ENCODE measurements at regions of chr5 and their contacts with region 1.

Region 1: DNA sequence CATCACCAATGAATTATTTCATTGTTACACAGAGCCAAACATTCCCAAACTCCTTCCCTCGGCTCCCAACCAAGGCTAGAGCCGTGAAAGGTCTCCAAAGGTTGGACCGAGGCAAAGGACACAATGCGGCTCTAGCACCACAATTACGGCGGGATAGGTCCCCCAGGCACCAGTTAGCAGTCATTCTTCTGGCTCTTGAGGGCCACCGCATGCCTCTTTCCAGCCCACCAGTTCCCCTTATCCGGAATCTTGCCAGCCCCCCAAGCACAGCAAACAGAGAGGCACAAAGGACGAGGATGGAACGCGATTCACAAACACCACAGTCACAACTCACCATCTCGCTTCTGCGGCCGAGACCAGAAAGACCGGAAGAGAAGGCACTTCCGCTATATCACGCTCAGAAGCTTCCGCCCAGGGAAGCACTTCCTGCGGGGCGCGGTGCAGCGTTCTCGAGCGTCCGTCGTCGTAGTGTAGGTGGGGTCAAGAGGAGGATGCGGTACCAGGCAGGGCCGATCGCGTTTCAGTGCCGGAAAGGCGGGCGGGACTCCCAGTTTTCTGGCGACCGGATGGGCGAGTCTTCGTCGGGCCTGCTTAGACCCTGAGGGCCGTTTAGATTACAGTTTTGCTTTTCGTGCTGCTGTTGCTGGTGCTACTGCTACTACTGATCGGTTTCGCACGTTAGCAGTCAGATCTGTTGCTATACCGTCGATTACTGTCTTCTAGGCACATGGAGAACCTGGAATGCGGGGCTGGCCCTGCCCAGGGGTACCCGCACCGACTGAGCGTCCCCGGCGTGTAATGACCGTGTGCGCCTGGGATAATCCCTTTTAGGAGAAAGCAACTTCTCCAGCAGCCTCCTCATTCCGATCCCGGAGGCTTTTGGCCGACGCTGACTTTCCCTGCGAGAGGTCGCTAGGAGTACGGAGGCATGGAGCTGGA is at the start of gene RPL37:
- DNase-seq: peak; percentile 96
- ATAC-seq: peak; percentile 93
- H3K4me3 Mint-ChIP-seq: peak within 1 kb of the TSS; percentile 99
- H3K27ac Mint-ChIP-seq: peak within 1 kb of the TSS; percentile 100
- H3K4me1 Mint-ChIP-seq: peaks cover 44% of the 10 kb centered on the region
- H3K27me3 Mint-ChIP-seq: no peaks in the 10 kb centered on the region
- total RNA-seq, gene RPL37: 1,915 to 1,951 TPM

Region 2: DNA sequence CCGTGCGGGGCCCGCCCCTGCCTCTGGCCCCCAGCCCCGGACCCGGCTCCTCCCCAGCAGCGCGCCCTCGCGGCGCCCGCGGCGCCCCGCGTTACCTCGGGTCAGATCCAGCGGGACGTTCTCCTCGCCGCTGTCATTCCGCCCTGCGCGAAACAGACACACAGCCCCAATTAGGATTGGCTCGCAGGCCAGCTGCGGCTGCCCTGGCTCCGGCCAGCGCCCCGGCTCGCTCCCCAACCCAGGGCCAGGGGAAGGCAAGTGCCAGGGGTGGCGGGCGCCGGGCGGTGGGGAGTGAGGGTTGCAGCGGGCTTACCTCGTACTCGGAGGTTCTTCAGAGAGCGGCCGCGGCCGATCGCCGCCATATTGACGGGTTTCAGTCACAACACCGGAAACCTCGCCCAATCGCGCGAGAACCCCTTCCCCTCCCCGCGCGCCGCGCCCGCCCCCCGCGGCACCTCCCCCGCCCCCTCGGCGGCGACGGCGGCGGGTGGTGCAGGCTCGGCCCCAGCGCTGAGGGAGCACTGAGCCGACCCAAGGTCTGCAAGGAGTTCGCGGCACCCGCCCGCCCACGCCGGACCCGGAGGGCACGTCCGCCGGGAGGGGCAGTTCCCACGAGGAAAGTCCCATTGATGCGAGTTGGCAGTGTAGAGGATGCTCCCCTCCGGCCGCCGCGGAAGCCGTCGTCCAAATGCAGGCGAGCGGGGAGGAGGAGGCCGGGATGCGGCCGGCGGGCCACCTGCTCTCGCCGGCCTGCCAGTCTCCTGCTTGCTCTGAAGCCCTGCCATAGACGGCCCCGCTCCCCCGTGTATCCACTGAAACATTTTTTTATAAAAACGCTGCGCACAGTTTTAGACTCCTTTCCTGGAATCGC is 1760.9 kb before region 1 on chr5 and contains the start of gene RICTOR:
- CTCF ChIA-PET with region 1: no interaction called
- POLR2A ChIA-PET with region 1: no interaction called
- intact Hi-C with region 1: loop called in 1 of 2 experiments (anchors 10 kb)
- DNase-seq: peak; percentile 97
- ATAC-seq: peak; percentile 84
- H3K4me3 Mint-ChIP-seq: peak within 1 kb of the TSS; percentile 96
- H3K27ac Mint-ChIP-seq: peak within 1 kb of the TSS; percentile 99
- H3K4me1 Mint-ChIP-seq: peaks cover 40% of the 10 kb centered on the region
- H3K27me3 Mint-ChIP-seq: peaks cover 7% of the 10 kb centered on the region
- total RNA-seq, gene RICTOR: 23.2 to 28.5 TPM

Region 3: GRCh38 chr5:40404613-40405012 is 430.5 kb before region 1 on chr5:
- CTCF ChIA-PET with region 1: no interaction called
- POLR2A ChIA-PET with region 1: no interaction called
- intact Hi-C with region 1: loop called (anchors 5 to 10 kb)
- DNase-seq: no peak
- ATAC-seq: peak; percentile 28
- H3K4me3 Mint-ChIP-seq: peak overlapping the region; percentile 18
- H3K27ac Mint-ChIP-seq: peak overlapping the region; percentile 99
- H3K4me1 Mint-ChIP-seq: peaks cover 94% of the 10 kb centered on the region
- H3K27me3 Mint-ChIP-seq: no peaks in the 10 kb centered on the region

Region 4: GRCh38 chr5:40755407-40756365 is 79.4 kb before region 1 on chr5 and contains the start of gene TTC33:
- CTCF ChIA-PET with region 1: interaction called, 4 read pairs
- POLR2A ChIA-PET with region 1: no interaction called
- intact Hi-C with region 1: loop called (anchors 1 kb)
- DNase-seq: peak; percentile 99
- ATAC-seq: peak; percentile 90
- H3K4me3 Mint-ChIP-seq: no peak within 1 kb of the TSS
- H3K27ac Mint-ChIP-seq: no peak within 1 kb of the TSS
- H3K4me1 Mint-ChIP-seq: peaks cover 21% of the 10 kb centered on the region
- H3K27me3 Mint-ChIP-seq: no peaks in the 10 kb centered on the region
- total RNA-seq, gene TTC33: 31.4 to 31.7 TPM

Region 5: DNA sequence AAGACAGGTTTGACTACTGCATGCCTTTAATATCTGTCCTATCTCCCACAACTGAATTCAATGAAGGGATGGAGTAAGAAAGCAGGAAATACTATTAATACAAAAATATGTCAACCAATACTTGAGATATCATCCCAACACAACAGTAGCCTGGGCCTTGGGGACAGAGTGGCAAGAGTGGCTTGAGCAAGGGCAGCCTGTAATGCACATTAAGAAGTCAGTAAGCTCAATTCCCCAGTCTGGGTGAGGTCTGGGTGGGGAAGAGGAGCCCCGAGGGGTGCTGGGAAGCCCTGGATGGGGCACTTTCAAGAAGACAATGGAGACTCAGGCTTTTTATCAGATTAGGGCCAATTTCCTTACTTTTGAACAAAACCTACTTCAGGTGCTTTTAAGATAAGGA is 31.2 kb after region 1 on chr5:
- CTCF ChIA-PET with region 1: no interaction called
- POLR2A ChIA-PET with region 1: no interaction called
- intact Hi-C with region 1: no loop called
- DNase-seq: no peak
- ATAC-seq: no peak
- H3K4me3 Mint-ChIP-seq: no peak overlapping the region
- H3K27ac Mint-ChIP-seq: no peak overlapping the region
- H3K4me1 Mint-ChIP-seq: no peaks in the 10 kb centered on the region
- H3K27me3 Mint-ChIP-seq: peaks cover 2% of the 10 kb centered on the region

Region 6: DNA sequence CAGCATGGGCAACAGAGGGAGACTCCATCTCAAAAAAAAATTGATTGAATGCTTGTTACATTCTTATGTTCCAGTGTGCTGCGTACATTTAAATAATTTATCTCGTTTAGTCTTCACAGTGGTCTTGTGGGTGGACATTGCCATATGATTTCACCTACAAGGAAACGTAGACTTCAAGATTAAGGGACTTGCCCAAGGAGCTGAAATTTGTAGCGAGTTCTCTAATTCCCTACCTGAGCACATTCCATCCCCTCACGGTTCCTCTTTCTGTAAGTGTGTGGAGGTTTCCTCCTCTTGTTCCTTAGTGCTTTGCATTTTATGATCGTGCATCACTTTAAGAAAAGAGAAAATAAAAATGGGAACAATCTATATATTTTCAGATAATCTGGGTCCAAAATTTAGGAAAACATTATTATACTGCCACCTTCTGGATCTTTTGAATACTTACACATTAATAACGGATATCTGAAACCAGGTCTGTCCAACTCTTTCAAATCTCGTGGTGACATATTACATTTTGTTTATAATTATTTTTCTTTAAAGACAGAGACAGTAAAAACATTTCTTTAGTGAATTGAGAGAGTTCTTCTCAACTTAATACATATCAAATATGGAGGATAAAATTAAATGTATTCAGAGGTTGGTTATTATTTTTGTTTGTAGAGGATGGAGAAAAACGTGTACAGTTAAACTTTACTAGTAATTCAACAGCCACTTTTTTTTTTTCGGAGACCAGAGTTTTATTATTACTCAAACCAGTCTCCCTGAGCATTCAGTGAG is 44.2 kb after region 1 on chr5:
- CTCF ChIA-PET with region 1: no interaction called
- POLR2A ChIA-PET with region 1: no interaction called
- intact Hi-C with region 1: loop called in 1 of 2 experiments (anchors 5 kb)
- DNase-seq: no peak
- ATAC-seq: no peak
- H3K4me3 Mint-ChIP-seq: no peak overlapping the region
- H3K27ac Mint-ChIP-seq: no peak overlapping the region
- H3K4me1 Mint-ChIP-seq: peaks cover 6% of the 10 kb centered on the region
- H3K27me3 Mint-ChIP-seq: peaks cover under 1% of the 10 kb centered on the region

Region 7: GRCh38 chr5:40984884-40985283 is 149.8 kb after region 1 on chr5:
- CTCF ChIA-PET with region 1: no interaction called
- POLR2A ChIA-PET with region 1: no interaction called
- intact Hi-C with region 1: no loop called
- DNase-seq: no peak
- ATAC-seq: no peak
- H3K4me3 Mint-ChIP-seq: no peak overlapping the region
- H3K27ac Mint-ChIP-seq: no peak overlapping the region
- H3K4me1 Mint-ChIP-seq: no peaks in the 10 kb centered on the region
- H3K27me3 Mint-ChIP-seq: peaks cover 2% of the 10 kb centered on the region

Region 8: DNA sequence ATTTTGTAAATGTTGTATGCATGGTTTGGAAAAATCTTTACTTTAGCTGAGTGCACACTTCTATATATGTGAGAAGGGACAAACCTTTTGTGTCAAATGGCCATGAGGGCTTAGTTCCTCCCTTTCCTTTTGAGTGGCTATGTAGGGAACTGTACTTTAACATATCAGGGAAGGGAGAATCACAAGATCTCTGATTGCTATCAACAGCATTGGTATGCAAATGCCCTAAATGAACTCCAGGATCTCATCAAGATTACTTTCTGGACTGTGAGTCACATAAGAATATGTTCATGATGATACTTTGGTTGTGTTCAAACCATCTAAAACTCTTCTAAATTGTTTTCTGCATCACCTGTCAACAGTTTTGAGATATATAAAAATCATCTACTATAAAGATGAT is 267.2 kb after region 1 on chr5:
- CTCF ChIA-PET with region 1: no interaction called
- POLR2A ChIA-PET with region 1: no interaction called
- intact Hi-C with region 1: no loop called
- DNase-seq: no peak
- ATAC-seq: no peak
- H3K4me3 Mint-ChIP-seq: no peak overlapping the region
- H3K27ac Mint-ChIP-seq: no peak overlapping the region
- H3K4me1 Mint-ChIP-seq: no peaks in the 10 kb centered on the region
- H3K27me3 Mint-ChIP-seq: no peaks in the 10 kb centered on the region

Region 9: DNA sequence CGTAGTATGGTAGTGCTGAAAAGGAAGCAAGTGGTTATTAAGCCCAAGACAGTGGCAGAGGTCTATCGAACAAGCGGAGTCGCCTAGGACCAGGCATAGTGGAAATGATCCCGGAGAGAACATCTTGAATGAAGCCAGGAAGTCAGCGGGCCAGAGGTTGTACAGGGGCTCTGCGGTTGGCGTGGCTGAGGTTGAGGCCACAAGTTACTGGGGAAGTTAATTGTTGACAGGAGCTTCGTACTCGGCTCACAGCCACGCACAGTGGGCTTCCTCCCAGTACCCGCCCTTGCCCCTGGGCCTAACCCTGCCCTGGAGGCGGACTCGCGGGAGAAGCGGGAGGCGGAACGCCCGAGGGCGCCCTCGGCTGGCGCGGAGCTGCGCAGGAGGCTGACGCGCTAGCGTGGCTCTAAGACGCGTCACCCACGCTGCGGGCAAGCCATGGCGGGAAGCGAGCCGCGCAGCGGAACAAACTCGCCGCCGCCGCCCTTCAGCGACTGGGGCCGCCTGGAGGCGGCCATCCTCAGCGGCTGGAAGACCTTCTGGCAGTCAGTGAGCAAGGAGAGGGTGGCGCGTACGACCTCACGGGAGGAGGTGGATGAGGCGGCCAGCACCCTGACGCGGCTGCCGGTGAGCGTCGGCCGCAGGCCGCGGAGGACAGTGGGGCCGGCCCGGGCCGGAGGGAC is 1089.9 kb after region 1 on chr5 and contains the start of gene FBXO4:
- CTCF ChIA-PET with region 1: no interaction called
- POLR2A ChIA-PET with region 1: no interaction called
- intact Hi-C with region 1: loop called in 1 of 2 experiments (anchors 5 kb)
- DNase-seq: peak; percentile 94
- ATAC-seq: peak; percentile 98
- H3K4me3 Mint-ChIP-seq: peak within 1 kb of the TSS; percentile 85
- H3K27ac Mint-ChIP-seq: peak within 1 kb of the TSS; percentile 99
- H3K4me1 Mint-ChIP-seq: peaks cover 24% of the 10 kb centered on the region
- H3K27me3 Mint-ChIP-seq: no peaks in the 10 kb centered on the region
- total RNA-seq, gene FBXO4: 18.8 to 22.3 TPM